ENCODE measurements at regions of chr3 and their contacts with region 1.

Region 1: GRCh38 chr3:171646357-171647133 is 163.7 kb downstream of the PLD1 start:
- DNase-seq: no peak
- H3K4me3 ChIP-seq: no peak overlapping the region
- H3K27ac ChIP-seq: peak overlapping the region; percentile 83
- H3K4me1 ChIP-seq: peaks cover 92% of the 10 kb centered on the region
- H3K27me3 ChIP-seq: no peaks in the 10 kb centered on the region
- CTCF ChIP-seq: peak; percentile 70

Region 2: GRCh38 chr3:171768281-171768900 is 121.8 kb after region 1 on chr3:
- intact Hi-C with region 1: loop called (anchors 10 kb)
- DNase-seq: no peak
- H3K4me3 ChIP-seq: peak overlapping the region; percentile 71
- H3K27ac ChIP-seq: peak overlapping the region; percentile 89
- H3K4me1 ChIP-seq: peaks cover 66% of the 10 kb centered on the region
- H3K27me3 ChIP-seq: no peaks in the 10 kb centered on the region
- CTCF ChIP-seq: no peak